Posterior vena cava (tissue), 2 donors: ENCODE measurements at regions of chr17 and their contacts with region 1.

Region 1: DNA sequence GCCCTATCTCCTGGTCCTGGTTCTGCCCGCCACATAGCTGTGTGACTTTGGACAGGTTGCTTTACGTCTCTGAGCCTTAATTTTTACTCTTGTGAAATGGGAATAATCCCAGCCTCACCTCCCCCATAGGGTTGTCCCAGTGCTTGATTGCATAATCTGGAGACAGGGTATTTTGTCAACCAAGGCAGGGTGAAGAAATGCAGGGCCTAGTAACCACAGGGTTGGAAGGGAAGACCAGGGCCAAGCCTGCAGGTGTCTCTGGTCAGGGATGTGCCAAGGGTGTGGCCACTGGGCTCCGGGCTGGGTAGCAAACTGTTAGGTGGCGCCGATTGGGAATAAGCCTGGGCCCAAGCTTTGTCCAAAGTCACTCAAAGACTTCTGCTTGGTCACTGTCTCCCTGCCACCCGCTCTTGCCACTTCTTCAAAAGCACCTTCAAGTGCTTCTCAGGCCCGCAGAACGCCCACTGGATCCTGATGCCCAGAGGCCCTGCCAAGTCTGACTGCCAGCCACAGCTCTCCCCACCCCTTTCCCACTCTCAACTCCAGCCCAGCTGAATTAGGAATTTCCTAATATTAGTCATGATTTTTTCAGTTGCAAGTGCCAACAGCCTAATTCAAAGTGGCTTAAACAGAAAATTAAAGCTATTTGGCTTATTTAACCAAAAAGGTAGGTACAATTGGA is 20.6 kb upstream of the COL1A1 start:
- DNase-seq: peak; percentile 88

Region 2: DNA sequence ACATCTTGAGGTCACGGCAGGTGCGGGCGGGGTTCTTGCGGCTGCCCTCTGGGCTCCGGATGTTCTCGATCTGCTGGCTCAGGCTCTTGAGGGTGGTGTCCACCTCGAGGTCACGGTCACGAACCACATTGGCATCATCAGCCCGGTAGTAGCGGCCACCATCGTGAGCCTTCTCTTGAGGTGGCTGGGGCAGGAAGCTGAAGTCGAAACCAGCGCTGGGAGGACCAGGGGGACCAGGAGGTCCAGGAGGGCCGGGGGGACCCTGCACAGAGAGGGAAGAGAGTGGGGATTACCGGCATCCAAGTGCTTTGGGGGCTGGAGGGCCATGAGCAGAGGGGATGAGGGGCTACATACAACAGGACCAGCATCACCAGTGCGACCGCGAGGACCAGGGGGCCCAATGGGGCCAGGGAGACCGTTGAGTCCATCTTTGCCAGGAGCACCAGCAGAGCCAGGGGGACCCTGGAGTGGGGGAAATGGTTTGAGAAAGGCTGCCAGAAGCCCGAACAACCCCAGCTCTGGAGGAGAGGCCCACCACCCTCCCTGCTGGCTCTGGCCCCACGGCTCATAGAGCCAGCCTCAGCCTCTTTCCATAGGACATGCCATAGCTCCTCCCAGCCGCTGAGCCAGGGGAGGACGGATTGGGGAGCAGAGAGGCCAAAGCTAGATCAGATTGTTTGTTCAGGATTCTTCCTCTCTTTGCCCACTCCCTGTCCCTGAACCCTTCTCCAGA is 35.2 kb before region 1 on chr17:
- intact Hi-C with region 1: loop called in 1 of 2 experiments (anchors 1 kb)
- DNase-seq: no peak

Region 3: DNA sequence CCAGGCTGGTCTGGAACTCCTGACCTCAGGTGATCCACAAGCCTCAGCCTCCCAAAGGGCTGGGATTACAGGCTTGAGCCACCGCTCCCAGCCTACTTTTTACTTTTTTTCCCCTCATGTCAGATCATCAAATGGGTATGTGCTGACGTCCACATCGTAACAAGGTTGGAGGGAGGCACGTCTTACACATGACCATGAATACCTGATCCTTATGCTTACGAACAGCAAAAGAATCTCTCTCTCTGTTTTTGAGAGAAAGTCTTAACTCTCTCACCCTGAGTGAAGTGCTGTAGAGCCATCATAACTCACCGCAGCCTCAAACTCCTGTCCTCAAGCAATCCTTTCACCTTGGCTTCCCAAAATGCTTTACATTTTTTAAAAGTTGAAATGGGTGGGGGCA is 22.8 kb after region 1 on chr17:
- intact Hi-C with region 1: no loop called
- DNase-seq: no peak

Region 4: DNA sequence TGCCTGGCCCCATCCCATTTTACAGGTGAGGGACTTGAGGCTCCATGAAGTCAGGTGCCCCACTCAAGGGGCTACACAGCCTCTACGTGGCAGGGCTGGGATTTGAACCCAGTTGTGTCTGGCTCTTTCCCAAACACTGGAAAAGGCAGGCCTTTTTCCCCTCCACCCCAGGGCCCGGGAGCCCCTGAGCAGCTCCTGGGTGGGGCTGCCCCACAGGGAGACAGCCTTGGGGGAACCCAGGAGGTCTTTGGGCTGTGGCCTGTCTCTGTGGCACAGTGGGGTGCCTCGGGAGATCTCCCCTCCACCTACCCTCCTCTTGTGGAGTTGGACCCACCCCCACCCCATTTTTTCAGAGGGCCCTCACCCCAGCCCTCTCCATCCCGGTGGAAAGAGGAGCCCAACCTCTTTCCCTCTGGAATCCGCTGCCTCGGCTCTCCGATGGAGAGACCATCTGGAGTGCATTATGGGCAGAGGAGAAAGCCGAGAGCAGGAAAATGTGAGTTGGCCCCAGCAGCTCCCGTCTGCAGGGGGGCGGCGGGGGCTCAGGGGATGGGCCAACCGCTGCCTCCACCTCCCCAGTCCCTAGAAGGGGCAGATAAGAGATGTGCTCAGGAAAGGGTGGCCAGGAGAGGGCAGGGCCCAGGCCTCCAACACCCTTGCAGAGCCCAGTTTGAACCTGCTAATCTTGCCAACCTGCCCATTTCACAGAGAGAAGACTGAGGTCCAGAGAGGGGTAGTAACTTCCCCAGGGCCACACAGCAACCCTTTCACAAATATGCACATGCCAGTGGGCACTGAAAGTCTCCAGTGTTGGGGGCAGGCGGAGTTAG is 36.9 kb after region 1 on chr17:
- intact Hi-C with region 1: loop called in 1 of 2 experiments (anchors 5 kb)
- DNase-seq: no peak